MCF 10A (cell line): ENCODE measurements at regions of chr2 and their contacts with region 1.

Region 1: GRCh38 chr2:176534798-176535466 is 265.7 kb downstream of the MTX2 start:
- DNase-seq: peak; percentile 34
- H3K4me3 Mint-ChIP-seq: no peak overlapping the region
- H3K27ac Mint-ChIP-seq: no peak overlapping the region
- H3K4me1 Mint-ChIP-seq: peaks cover 37% of the 10 kb centered on the region
- H3K27me3 Mint-ChIP-seq: no peaks in the 10 kb centered on the region
- CTCF ChIP-seq: no peak

Region 2: DNA sequence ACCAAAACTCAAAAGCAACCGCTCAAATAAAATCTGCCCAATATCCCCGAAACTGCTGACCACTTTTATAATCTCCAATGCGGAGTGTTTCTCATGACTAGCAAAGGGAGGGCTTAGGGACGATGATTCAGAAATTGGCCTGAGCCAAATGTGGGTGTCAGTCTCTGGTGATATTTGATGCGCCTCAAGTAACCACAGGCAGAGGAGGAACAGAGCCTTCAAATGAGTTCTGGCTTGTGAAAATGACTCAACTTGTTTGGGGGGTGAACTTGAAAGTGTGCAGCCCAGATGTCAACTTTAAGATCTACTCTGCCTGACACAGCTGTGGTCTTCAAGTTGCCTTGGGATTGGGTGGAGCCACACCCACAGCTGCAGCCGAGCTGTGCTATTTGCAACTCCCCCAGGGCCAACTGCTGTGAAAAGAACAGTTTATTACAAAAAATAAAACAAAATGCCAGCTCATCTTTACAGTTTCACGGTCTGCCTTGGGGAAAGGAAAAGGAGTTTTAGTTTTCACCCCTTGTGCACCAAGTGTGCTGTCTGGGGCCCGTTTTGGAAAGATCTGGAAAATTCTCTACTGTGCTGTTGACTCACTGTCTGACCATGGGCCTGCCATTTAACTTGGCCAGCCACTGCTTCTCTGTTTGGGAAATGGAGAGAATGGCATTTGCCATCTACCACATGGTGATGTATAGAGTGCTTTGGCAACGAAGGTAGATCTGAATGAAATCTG is 43.6 kb before region 1 on chr2:
- CTCF ChIA-PET with region 1: no interaction called
- POLR2A ChIA-PET with region 1: interaction called, 13 read pairs
- intact Hi-C with region 1: no loop called
- DNase-seq: peak; percentile 99
- H3K4me3 Mint-ChIP-seq: peak overlapping the region; percentile 55
- H3K27ac Mint-ChIP-seq: peak overlapping the region; percentile 90
- H3K4me1 Mint-ChIP-seq: peaks cover 54% of the 10 kb centered on the region
- H3K27me3 Mint-ChIP-seq: no peaks in the 10 kb centered on the region
- CTCF ChIP-seq: no peak

Region 3: GRCh38 chr2:176522271-176522670 is 12.7 kb before region 1 on chr2:
- CTCF ChIA-PET with region 1: interaction called, 7 read pairs
- POLR2A ChIA-PET with region 1: interaction called, 12 read pairs
- intact Hi-C with region 1: no loop called
- DNase-seq: no peak
- H3K4me3 Mint-ChIP-seq: no peak overlapping the region
- H3K27ac Mint-ChIP-seq: no peak overlapping the region
- H3K4me1 Mint-ChIP-seq: peaks cover 11% of the 10 kb centered on the region
- H3K27me3 Mint-ChIP-seq: no peaks in the 10 kb centered on the region
- CTCF ChIP-seq: no peak